Naive thymus-derived CD8-positive, alpha-beta T cell (primary cell): ENCODE measurements at regions of chr19 and their contacts with region 1.

Region 1: GRCh38 chr19:51703575-51704515 is 10.7 kb downstream of the SPACA6 start:
- DNase-seq: peak; percentile 93 to 98 (median 96)
- ATAC-seq: peak; percentile 89 to 92
- H3K4me3 Mint-ChIP-seq: peak overlapping the region; percentile 86 to 96 (median 90)
- H3K27ac Mint-ChIP-seq: peak overlapping the region; percentile 79 to 96 (median 93)
- H3K4me1 Mint-ChIP-seq: peaks cover 29 to 49% (median 36%) of the 10 kb centered on the region in 4 donors
- H3K27me3 Mint-ChIP-seq: peaks cover 0 to 6% (median 0%) of the 10 kb centered on the region in 5 donors

Region 2: DNA sequence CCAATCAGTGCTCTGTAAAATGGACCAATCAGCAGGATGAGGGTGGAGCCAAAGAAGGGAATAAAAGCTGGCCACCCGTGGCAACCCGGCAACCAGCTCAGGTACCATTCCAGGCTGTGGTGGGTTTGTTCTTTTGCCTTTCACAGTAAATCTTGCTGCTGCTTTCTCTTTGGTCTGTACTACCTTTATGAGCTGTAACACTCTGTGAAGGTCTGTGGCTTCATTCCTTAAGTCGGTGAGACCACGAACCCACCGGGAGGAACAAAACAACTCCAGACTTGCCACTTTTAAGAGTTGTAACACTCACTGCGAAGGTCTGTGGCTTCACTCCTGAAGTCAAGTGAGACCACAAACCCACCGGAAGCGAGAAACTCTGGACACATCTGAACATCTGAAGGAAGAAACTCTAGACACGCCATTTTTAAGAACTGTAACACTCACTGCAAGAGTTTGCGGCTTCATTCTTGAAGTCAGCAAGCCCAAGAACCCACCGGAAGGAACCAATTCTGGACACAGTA is 27.2 kb before region 1 on chr19:
- POLR2A ChIA-PET with region 1: interaction called, 11 read pairs
- DNase-seq: peak in 7 of 10 donors; percentile 24 to 74 (median 53)
- ATAC-seq: peak; percentile 86 to 92
- H3K4me3 Mint-ChIP-seq: peak overlapping the region; percentile 42 to 76 (median 63)
- H3K27ac Mint-ChIP-seq: peak overlapping the region; percentile 48 to 84 (median 80)
- H3K4me1 Mint-ChIP-seq: peaks cover 2 to 20% (median 19%) of the 10 kb centered on the region in 4 donors
- H3K27me3 Mint-ChIP-seq: peaks cover 0 to 18% (median 0%) of the 10 kb centered on the region in 5 donors

Region 3: DNA sequence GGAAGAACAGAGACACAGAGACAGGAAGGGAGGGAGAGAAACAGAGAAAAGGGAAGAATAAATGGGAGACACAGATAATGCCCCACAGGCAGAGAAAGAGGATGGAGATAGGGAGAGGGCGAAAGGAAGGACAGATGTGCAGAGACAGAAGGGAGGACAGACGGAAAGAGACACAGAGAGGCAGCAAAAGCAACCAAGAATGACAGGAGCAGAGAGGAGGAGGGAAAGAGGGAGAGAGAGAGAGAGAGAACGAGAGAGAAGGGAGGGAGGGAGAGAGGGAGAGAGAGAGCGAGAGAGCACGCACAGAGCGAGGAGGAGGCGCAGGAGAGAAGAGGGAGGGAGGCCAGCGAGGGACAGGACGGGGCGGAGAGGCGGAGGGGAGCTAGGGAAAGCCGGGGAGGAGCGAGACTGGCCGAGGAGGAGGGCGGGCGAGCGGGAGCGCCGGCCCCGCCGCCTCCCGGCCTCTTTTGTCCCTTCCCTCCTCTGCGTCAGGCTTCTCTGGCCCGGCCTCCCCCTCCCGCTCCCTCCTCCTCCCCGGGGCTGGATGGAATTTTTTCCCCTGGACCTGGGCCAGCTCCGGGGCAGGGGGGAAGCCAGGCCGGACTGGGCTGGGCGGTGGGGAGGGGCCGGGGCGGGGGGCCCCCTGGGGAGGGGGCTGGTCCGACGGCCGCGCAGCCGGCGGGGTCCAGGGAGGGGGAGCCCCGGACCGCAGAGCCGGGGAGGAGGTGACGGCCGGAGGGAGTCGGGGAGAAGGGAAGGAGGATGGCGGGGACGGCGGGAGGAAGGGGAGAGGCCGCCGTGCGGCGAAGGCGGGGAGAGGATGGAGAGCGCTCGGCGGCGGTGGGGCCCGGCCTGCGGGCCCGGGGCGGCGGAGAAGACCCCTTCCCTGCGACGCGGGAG is 14.9 kb before region 1 on chr19:
- POLR2A ChIA-PET with region 1: interaction called, 16 read pairs
- DNase-seq: no peak
- ATAC-seq: peak in 1 of 2 donors; percentile 20
- H3K4me3 Mint-ChIP-seq: peak overlapping the region; percentile 69 to 89 (median 82)
- H3K27ac Mint-ChIP-seq: peak overlapping the region in 5 of 10 donors; percentile 61 to 90 (median 87)
- H3K4me1 Mint-ChIP-seq: peaks cover 14 to 37% (median 23%) of the 10 kb centered on the region in 4 donors
- H3K27me3 Mint-ChIP-seq: peaks cover 1 to 26% (median 16%) of the 10 kb centered on the region in 5 donors